ENCODE measurements at regions of chr2 and their contacts with region 1.

Region 1: GRCh38 chr2:61538200-61538919 is at the start of gene XPO1:
- DNase-seq: peak; percentile 99 to 100
- H3K4me3 ChIP-seq: peak within 1 kb of the TSS; percentile 66 to 90
- H3K27ac ChIP-seq: peak within 1 kb of the TSS; percentile 99
- H3K4me1 ChIP-seq: peaks cover 36% of the 10 kb centered on the region
- H3K27me3 ChIP-seq: no peaks in the 10 kb centered on the region
- CTCF ChIP-seq: no peak
- POLR2A ChIP-seq: peak in 1 of 2 donors; percentile 94
- total RNA-seq, gene XPO1: 89.1 TPM

Region 2: GRCh38 chr2:61470965-61471904 is 67.1 kb before region 1 on chr2 and contains the start of gene USP34:
- intact Hi-C with region 1: loop called (anchors 5 kb)
- DNase-seq: peak in 1 of 2 donors; percentile 93
- H3K4me3 ChIP-seq: peak within 1 kb of the TSS; percentile 88 to 96
- H3K27ac ChIP-seq: peak within 1 kb of the TSS; percentile 99
- H3K4me1 ChIP-seq: peaks cover 30% of the 10 kb centered on the region
- H3K27me3 ChIP-seq: no peaks in the 10 kb centered on the region
- CTCF ChIP-seq: no peak
- POLR2A ChIP-seq: peak in 1 of 2 donors; percentile 77
- total RNA-seq, gene USP34: 117 TPM

Region 3: DNA sequence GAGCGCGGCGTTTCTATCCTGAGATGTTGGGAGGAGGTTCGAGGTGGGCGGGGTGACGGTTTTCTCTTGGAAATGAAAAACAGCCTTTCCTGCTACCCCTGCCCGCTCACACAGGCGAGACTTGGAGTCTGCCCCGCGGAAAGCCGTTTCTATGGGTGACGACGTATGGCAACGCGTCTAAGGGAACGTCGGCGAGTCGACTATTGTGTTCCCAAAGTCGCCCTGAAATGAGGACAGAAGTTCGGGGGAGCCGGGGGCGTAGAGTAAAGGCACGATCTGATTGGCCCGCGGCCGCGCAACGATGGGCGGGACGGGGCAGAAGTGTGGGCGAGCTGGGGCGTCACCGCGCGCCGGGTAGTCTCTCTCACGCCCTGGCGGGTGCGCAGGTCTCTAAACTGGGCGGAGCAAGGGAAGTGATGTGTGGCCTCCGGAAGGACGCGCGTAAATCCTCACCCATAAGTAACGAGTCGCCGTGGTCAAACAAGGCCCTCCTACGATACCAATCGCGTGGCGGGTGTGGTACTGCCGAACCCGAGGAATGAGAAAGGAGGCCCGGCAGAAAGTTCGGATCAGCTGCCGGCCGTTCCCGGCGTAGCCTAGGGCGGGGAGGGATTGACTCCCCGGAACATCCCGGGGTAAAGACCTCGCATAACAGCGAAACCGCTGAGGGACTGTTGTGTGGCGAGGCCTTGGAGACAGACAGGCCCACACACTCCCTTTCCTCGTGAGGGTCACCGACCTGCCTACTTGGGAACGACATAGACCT is 225.9 kb after region 1 on chr2:
- intact Hi-C with region 1: loop called (anchors 2 kb)
- DNase-seq: peak; percentile 96 to 97
- H3K4me3 ChIP-seq: peak overlapping the region; percentile 69 to 83
- H3K27ac ChIP-seq: peak overlapping the region; percentile 97
- H3K4me1 ChIP-seq: peaks cover 9% of the 10 kb centered on the region
- H3K27me3 ChIP-seq: no peaks in the 10 kb centered on the region
- CTCF ChIP-seq: no peak
- POLR2A ChIP-seq: peak in 1 of 2 donors; percentile 86

Region 4: GRCh38 chr2:63378589-63378988 is 1840.2 kb after region 1 on chr2:
- intact Hi-C with region 1: no loop called
- DNase-seq: no peak
- H3K4me3 ChIP-seq: no peak overlapping the region
- H3K27ac ChIP-seq: no peak overlapping the region
- H3K4me1 ChIP-seq: no peaks in the 10 kb centered on the region
- H3K27me3 ChIP-seq: no peaks in the 10 kb centered on the region
- CTCF ChIP-seq: no peak
- POLR2A ChIP-seq: no peak